Endothelial cell of umbilical vein (primary cell): ENCODE measurements at regions of chr3 and their contacts with region 1.

Region 1: DNA sequence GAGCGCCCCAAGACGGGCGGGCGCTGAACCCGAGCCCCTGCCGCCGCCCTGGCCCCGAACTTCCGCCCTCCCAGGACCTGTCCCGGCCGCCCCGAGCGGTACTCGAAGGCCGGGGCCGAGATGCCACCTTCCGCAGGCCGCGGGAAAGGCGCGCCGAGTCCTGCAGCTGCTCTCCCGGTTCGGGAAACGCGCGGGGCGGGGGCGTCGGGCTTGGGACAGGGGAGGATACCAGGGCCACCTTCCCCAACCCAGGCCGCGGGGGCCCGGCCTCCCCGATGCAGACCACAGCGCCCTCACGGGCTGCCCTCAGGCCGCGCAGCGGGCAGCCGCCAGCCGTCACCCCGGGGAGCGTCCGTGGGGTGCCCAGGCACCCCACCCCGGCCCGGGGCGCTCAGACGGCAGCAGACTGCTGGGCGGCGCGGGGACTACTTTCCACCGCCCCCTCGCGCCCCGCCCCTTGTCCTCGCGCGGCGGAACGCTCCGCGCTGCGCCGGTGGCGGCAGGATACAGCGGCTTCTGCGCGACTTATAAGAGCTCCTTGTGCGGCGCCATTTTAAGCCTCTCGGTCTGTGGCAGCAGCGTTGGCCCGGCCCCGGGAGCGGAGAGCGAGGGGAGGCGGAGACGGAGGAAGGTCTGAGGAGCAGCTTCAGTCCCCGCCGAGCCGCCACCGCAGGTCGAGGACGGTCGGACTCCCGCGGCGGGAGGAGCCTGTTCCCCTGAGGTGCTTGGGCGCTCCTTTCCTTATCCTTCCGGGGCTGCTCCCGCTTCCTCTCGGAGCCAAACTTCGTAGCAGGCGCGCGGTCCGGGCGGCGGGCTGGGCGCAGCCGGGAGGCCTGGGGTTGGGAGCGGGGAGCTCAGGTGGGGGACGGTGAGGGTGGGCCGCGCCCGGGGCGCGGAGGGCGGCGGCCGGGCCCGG is at the start of gene CTNNB1:
- DNase-seq: peak; percentile 91
- H3K4me3 ChIP-seq: peak within 1 kb of the TSS; percentile 35 to 90 (median 83)
- H3K27ac ChIP-seq: peak within 1 kb of the TSS; percentile 79
- H3K4me1 ChIP-seq: peaks cover 18% of the 10 kb centered on the region
- H3K27me3 ChIP-seq: peaks cover 2 to 6% of the 10 kb centered on the region in 2 experiments
- CTCF ChIP-seq: no peak
- POLR2A ChIP-seq: peak; percentile 95
- total RNA-seq, gene CTNNB1: 513 and 566 TPM in 2 replicates

Region 2: DNA sequence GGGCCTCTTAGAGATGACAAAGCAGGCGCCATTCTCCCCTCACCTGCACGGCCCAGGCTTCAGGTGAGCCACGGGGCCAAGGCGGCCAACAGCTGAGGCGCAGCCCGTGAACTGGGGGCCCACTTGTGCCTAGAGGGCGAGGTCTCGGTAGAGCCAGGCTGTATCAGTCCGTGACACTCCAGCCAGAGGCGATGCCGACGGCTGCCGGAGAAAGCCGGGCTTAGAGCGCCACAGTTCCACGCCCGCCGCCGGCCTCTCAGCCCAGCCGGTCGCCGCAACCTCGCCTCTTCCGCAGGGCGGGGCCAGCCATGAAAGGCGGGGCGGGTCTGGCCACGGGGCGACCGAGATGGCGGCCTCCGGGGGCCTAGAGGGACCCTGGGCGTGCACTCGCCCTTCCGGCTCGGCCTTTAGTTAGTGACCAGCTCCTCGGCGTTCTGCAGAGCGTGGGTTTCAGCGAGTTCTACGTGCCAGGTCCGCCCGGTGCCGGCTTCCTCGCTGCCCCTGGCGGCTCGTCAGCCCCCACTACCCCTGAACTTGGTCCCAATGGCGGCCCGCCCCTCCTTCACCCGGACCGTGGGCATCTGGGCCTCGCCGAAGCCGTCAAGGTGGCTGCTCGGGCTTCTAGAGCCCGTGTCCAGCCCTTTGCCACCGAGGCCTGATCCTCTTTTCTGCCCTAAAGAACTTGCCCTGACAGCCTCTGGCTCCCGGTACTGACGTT is 674.5 kb before region 1 on chr3 and contains the start of gene ZNF621:
- CTCF ChIA-PET with region 1: interaction called, 3 read pairs
- POLR2A ChIA-PET with region 1: no interaction called
- dilution Hi-C with region 1: no loop called
- intact Hi-C with region 1: loop called (anchors 2 kb)
- DNase-seq: peak; percentile 87
- H3K4me3 ChIP-seq: peak within 1 kb of the TSS; percentile 69 to 91 (median 84)
- H3K27ac ChIP-seq: peak within 1 kb of the TSS; percentile 71
- H3K4me1 ChIP-seq: peaks cover 14% of the 10 kb centered on the region
- H3K27me3 ChIP-seq: no peaks in the 10 kb centered on the region
- CTCF ChIP-seq: no peak
- POLR2A ChIP-seq: peak; percentile 94
- total RNA-seq, gene ZNF621: 20.6 and 22.5 TPM in 2 replicates

Region 3: GRCh38 chr3:40877631-40878463 is 321.4 kb before region 1 on chr3:
- CTCF ChIA-PET with region 1: no interaction called
- POLR2A ChIA-PET with region 1: interaction called, 4 read pairs
- dilution Hi-C with region 1: no loop called
- intact Hi-C with region 1: loop called (anchors 1 kb)
- DNase-seq: peak; percentile 94
- H3K4me3 ChIP-seq: no peak overlapping the region
- H3K27ac ChIP-seq: peak overlapping the region; percentile 49
- H3K4me1 ChIP-seq: peaks cover 20% of the 10 kb centered on the region
- H3K27me3 ChIP-seq: no peaks in the 10 kb centered on the region
- CTCF ChIP-seq: no peak
- POLR2A ChIP-seq: peak; percentile 53

Region 4: GRCh38 chr3:41088882-41089281 is 110.3 kb before region 1 on chr3:
- CTCF ChIA-PET with region 1: no interaction called
- POLR2A ChIA-PET with region 1: no interaction called
- dilution Hi-C with region 1: no loop called
- intact Hi-C with region 1: no loop called
- DNase-seq: no peak
- H3K4me3 ChIP-seq: no peak overlapping the region
- H3K27ac ChIP-seq: no peak overlapping the region
- H3K4me1 ChIP-seq: no peaks in the 10 kb centered on the region
- H3K27me3 ChIP-seq: no peaks in the 10 kb centered on the region
- CTCF ChIP-seq: no peak
- POLR2A ChIP-seq: no peak

Region 5: GRCh38 chr3:41117398-41117870 is 81.8 kb before region 1 on chr3:
- CTCF ChIA-PET with region 1: no interaction called
- POLR2A ChIA-PET with region 1: interaction called, 3 read pairs
- dilution Hi-C with region 1: no loop called
- intact Hi-C with region 1: loop called (anchors 1 kb)
- DNase-seq: peak; percentile 89
- H3K4me3 ChIP-seq: no peak overlapping the region
- H3K27ac ChIP-seq: peak overlapping the region; percentile 23
- H3K4me1 ChIP-seq: peaks cover 17% of the 10 kb centered on the region
- H3K27me3 ChIP-seq: peaks cover 4 to 21% of the 10 kb centered on the region in 2 experiments
- CTCF ChIP-seq: no peak
- POLR2A ChIP-seq: no peak

Region 6: DNA sequence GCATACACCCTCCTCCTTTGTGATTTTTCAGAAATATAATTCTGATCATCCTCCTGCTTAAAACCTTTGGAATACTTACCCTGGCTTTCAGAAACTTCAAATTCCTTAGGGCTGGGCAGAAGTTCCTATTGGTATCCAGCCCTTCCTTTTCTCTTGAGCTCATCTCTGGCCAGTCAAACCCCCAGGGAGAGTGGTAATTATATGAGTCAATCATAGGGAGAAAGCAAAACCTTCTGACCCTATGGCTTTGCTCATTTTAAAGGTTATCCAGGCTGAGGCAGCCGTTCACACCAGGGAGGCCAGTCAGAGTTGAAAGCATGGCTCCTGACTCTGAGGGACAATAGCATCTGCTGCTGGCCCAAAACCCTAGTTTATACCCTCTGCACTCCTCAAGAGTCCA is 23.8 kb before region 1 on chr3:
- CTCF ChIA-PET with region 1: no interaction called
- POLR2A ChIA-PET with region 1: no interaction called
- dilution Hi-C with region 1: no loop called
- intact Hi-C with region 1: no loop called
- DNase-seq: no peak
- H3K4me3 ChIP-seq: no peak overlapping the region
- H3K27ac ChIP-seq: no peak overlapping the region
- H3K4me1 ChIP-seq: no peaks in the 10 kb centered on the region
- H3K27me3 ChIP-seq: peaks cover 9 to 14% of the 10 kb centered on the region in 2 experiments
- CTCF ChIP-seq: no peak
- POLR2A ChIP-seq: no peak

Region 7: DNA sequence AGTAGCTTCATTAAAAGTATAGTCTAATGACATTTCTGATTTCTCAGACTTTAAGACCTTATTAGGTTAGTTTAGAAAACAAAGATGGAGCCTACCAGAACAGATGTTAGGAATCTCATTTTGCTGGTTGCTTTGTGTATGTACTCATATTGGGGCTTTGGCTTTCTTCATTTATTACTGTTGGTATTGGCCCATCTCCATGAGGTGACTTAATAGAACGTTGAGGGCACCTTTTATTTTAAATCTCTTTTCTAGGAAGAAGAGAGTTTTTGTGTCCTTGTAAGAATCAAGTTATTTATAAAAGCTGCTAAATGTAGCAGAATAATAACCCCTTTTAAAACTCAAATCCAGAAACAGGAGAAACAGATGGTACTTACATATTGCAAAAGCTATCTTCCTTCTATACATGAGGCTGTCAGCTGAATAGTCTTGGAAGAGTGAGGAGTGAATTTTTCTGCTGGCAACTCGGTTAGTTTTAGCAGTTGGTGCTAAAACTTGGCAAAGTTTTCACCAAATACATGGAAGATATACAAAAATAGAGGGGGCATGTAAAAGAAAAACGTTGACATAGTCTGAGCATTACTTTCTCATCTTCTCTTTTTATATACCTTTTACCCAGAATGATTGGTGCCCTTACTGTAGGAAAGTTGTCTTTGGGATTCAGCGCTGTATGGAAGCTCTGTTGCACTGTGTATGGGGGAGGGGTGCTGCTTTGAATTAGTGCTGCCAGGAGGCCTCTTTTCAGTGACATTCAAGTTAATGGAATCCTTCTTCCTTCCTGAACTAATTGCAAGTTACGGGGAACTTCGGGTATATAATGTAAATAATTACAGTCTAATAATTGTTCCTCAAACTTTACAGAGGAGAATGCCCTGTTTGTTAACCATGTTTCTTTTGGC is 35.9 kb after region 1 on chr3:
- CTCF ChIA-PET with region 1: no interaction called
- POLR2A ChIA-PET with region 1: interaction called, 3 read pairs
- dilution Hi-C with region 1: no loop called
- intact Hi-C with region 1: loop called (anchors 2 kb)
- DNase-seq: no peak
- H3K4me3 ChIP-seq: no peak overlapping the region
- H3K27ac ChIP-seq: no peak overlapping the region
- H3K4me1 ChIP-seq: no peaks in the 10 kb centered on the region
- H3K27me3 ChIP-seq: no peaks in the 10 kb centered on the region
- CTCF ChIP-seq: no peak
- POLR2A ChIP-seq: no peak

Region 8: GRCh38 chr3:41569632-41570305 is 370.6 kb after region 1 on chr3:
- CTCF ChIA-PET with region 1: no interaction called
- POLR2A ChIA-PET with region 1: no interaction called
- dilution Hi-C with region 1: no loop called
- intact Hi-C with region 1: no loop called
- DNase-seq: no peak
- H3K4me3 ChIP-seq: no peak overlapping the region
- H3K27ac ChIP-seq: no peak overlapping the region
- H3K4me1 ChIP-seq: no peaks in the 10 kb centered on the region
- H3K27me3 ChIP-seq: no peaks in the 10 kb centered on the region
- CTCF ChIP-seq: no peak
- POLR2A ChIP-seq: no peak

Region 9: DNA sequence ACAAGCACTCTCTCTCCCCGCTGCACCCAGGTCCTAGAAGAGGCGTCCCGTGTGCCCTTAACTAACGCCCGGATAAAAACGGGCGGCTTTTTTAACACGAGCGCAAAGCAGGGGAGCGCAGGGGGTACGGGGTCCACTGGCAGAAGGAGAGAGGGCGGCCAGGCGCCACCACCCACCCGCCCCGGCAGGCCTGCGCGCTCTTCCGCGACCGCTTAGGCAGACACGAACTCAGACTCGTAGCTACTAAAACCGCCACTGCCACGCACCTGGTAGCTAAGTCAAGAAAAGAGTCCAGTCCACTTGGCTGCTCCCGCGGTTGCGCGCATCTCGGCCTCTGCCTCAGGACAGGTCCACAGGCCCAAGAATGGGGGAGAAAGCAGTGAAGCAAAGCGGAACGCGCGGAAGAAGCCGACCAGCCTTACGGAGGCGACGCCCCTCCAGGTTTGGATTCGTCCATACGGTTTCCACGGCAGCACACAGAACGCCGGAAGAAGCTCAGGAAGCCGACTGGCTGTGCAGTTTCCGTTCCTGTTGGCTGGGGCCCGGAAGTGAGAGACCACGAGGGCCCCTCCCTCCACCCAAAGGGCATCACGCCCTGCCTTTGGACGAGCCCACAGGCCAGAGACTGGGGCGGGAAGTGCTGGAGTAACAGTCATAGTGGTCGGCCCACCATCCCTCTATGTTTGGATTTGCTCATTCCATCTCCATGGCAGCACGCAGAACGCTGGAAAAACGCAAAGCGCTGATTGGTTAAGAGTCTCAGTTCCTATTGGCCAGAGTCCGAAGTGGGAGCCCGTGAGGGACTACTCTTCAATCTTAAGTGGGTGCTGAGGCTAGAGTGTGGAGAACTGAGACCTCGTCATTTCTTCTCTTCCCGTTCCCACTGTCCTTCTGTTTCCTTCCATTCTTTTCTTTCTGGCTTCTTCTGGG is 762.8 kb after region 1 on chr3 and contains the start of gene ULK4:
- CTCF ChIA-PET with region 1: no interaction called
- POLR2A ChIA-PET with region 1: no interaction called
- dilution Hi-C with region 1: no loop called
- intact Hi-C with region 1: loop called (anchors 5 kb)
- DNase-seq: peak; percentile 100
- H3K4me3 ChIP-seq: peak within 1 kb of the TSS; percentile 29 to 72 (median 64)
- H3K27ac ChIP-seq: peak within 1 kb of the TSS; percentile 90
- H3K4me1 ChIP-seq: peaks cover 13% of the 10 kb centered on the region
- H3K27me3 ChIP-seq: no peaks in the 10 kb centered on the region
- CTCF ChIP-seq: no peak
- POLR2A ChIP-seq: peak; percentile 63
- total RNA-seq, gene ULK4: 13.1 and 16.0 TPM in 2 replicates